ENCODE measurements at regions of chr19 and their contacts with region 1.

Region 1: DNA sequence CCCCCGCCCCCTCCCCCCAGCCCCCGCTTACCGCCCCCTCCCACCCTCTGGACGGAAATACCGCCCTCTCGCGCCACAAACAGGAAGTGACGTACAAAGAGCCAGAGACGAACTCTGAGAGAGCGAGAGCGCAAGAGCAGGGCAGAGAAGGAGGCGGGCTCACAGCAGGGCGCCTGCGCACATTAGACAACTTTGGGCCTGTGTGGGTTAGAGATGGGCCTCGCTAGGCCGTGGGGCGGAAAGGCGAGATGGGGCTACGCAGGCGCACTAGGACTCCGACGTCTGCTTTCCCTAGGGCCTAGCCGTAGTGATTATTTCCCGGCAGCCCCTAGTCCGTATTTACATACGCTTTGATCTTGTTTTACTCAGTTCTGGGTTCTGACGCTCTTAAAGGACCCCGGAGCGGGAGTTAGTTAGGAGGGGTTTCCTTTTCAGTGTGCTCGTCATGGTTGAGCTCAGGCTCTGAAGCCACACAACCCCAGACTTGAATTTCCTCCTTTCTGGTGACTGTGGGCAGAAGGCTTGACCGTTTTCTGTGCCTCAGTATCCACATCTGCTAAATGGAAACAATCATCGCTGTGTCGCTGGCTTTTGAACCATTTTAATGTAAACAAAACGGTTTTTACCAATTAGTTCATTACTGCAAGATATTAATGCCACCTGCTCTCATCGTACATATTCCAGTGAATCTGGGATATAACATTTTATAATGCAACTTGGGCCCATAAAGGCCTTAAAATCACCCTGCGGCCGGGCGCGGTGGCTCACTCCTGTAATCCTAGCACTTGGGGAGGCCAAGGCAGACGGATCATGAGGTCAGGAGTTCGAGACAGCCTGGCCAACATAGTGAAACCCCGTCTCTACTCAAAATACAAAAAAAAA is 449 bp upstream of the AKT2 start:
- DNase-seq: peak; percentile 98
- H3K4me3 Mint-ChIP-seq: peak overlapping the region; percentile 80
- H3K27ac Mint-ChIP-seq: peak overlapping the region; percentile 98
- H3K4me1 Mint-ChIP-seq: peaks cover 32% of the 10 kb centered on the region
- H3K27me3 Mint-ChIP-seq: no peaks in the 10 kb centered on the region

Region 2: GRCh38 chr19:39435499-39436349 is 849.9 kb before region 1 on chr19 and contains the start of gene RPS16:
- intact Hi-C with region 1: loop called (anchors 10 kb)
- DNase-seq: peak; percentile 99
- H3K4me3 Mint-ChIP-seq: peak within 1 kb of the TSS; percentile 99
- H3K27ac Mint-ChIP-seq: peak within 1 kb of the TSS; percentile 99
- H3K4me1 Mint-ChIP-seq: peaks cover 37% of the 10 kb centered on the region
- H3K27me3 Mint-ChIP-seq: no peaks in the 10 kb centered on the region
- total RNA-seq, gene RPS16: 2,440 and 2,532 TPM in 2 replicates

Region 3: DNA sequence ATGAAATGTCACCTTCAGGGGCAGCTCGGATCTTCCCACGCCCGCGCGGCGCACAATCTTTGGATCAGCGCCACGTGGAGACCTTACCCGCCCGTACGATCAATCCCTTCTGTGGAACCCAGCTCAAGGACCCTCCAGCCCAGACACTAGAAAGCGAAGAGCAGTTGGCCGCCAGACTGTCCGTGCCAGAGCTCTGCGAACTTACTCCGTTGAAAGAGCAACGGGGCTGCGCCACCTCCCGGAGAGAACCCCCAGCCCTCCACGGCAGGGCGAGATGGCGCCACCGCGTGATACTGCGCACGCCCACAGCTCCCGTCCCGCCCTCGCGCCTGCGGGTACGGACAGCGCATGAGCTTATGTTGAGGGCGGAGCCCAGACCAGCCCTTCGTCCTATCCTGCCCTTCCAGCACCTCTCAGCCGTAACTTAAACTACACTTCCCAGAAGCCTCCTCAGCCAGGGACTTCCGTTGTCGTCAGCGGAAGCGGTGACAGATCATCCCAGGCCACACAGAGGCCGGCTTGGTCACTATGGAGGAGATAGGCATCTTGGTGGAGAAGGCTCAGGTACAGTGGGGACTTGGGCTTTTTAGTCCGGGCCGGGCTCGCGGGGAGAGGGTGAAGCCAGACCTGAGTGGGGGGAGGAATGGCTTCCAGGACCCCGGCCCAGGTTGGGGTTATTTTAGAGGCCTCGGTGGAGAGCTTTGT is 314.8 kb before region 1 on chr19 and contains the start of gene PSMC4:
- intact Hi-C with region 1: no loop called
- DNase-seq: peak; percentile 99
- H3K4me3 Mint-ChIP-seq: peak within 1 kb of the TSS; percentile 95
- H3K27ac Mint-ChIP-seq: peak within 1 kb of the TSS; percentile 97
- H3K4me1 Mint-ChIP-seq: peaks cover 54% of the 10 kb centered on the region
- H3K27me3 Mint-ChIP-seq: no peaks in the 10 kb centered on the region
- total RNA-seq, gene PSMC4: 189 and 190 TPM in 2 replicates

Region 4: DNA sequence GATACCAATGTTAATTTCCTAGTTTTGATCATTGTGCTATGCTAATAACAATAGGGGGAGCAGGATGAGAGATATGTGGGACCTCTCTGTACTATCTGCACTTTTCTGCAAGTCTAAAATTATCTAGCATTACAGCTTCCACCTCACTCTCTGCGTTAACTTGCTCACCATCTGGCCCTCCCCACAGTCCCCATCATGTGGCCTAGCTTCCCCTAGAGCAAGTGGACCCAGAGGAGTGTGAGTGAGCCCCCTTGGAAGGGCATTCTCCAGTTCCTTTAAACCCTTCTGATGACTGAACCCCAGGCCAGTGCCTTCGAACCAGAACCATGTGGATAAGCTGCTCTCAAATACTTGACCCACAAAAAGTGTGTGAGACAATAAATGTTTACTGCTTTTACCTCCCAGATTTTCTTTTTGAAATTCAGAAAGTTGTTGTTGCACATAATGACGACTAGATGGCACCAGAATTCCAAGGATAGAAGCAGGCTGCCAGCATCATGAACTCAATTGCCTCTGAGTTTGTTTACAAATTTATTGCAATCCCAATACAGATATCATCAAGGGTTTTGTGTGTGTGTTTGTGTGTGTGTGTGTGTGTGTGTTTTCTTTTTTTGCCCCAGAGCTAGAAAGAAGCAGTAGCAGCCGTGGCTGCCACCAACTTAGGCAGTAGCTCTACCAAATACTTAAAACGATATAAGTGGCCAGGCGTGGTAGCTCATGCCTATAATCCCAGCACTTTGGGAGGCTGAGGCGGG is 145.9 kb before region 1 on chr19:
- intact Hi-C with region 1: loop called (anchors 10 kb)
- DNase-seq: no peak
- H3K4me3 Mint-ChIP-seq: no peak overlapping the region
- H3K27ac Mint-ChIP-seq: no peak overlapping the region
- H3K4me1 Mint-ChIP-seq: peaks cover 16% of the 10 kb centered on the region
- H3K27me3 Mint-ChIP-seq: peaks cover 2% of the 10 kb centered on the region

Region 5: DNA sequence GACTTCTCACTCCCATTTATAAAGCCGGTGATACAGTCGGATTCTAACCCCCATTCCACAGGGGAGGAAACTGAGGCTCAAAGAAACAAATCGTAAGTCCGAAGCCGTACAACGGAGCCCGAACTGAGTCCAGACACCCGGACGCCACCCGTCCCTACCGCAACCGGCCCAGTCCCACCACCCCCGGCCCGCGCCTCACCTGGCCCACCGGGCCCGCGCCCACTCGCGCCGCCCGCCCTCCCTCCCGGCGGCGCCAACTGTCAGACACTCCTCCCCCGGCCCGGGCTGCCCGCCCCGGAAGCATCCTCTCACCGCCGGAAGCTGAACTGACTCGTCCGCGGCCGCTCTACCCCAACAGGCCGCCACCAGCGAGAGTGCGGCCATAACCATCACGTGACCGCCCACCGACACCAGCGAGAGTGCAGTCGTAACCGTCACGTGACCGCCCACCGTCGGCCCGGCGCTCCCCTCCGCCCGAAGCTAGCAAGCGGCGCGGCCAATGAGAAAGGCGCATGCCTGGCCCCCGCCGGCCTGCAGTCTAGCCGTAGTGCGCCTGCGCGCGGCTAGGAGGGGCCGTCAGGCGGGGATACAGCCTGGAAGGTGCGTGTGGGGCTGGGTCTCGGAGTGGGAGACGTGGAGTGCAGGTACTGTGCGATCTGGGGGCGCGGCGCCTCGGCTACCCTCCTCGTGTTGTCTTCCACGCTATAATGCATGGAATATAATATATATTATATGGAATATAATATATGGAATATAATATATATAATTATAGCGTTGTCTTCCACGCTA is 62.7 kb after region 1 on chr19 and contains the starts of genes C19orf47 and PLD3:
- intact Hi-C with region 1: loop called (anchors 1 kb)
- DNase-seq: peak; percentile 99
- H3K4me3 Mint-ChIP-seq: peak within 1 kb of the TSS; percentile 97
- H3K27ac Mint-ChIP-seq: peak within 1 kb of the TSS; percentile 95
- H3K4me1 Mint-ChIP-seq: peaks cover 21% of the 10 kb centered on the region
- H3K27me3 Mint-ChIP-seq: peaks cover 2% of the 10 kb centered on the region
- total RNA-seq, gene C19orf47: 26.4 and 28.1 TPM in 2 replicates
- total RNA-seq, gene PLD3: 45.0 and 45.3 TPM in 2 replicates

Region 6: DNA sequence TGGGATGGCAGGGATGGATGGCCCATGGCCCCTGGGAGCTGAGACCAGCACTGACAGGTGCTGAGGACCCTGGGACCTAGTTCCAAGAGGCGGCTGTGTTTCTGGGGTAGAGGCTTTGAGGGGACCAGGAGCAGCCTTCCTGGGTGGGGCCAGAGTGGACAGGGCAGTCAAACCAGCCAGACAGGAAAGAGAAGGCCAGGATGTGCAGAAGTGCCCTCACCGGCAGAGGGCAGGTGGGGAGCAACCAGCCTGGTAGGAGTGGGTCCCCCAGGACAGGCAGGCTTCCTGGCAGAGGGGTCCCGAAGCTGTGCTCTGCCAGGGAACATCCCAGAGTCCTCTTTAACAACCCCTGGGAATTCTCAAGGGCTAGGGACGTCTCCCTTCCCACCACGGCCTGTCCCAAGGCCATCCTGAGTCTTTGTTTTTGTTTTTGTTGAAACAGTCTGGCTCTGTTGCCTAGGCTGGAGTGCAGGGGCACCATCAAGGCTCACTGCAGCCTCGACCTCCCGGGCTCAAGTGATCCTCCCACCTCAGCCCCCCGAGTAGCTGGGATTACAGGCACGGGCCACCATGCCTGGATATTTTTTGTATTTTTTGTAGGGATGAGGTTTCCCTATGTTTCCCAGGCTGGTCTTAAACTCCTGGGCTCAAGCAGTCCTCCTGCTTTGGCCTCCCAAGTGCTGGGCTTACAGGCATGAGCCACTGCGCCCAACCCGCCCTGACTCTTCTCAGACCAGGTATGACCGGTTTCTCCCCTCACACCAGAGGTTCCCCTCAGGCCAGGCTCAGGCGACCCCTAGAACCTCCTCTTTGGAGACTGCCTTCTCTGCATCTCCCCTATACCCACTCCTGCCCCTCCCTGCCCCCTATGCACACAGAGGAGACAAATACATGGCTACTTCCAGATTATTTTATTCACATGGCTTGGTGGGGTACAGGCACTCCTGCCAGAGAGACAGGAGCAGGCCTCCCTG is 107.6 kb after region 1 on chr19:
- intact Hi-C with region 1: no loop called
- DNase-seq: no peak
- H3K4me3 Mint-ChIP-seq: no peak overlapping the region
- H3K27ac Mint-ChIP-seq: no peak overlapping the region
- H3K4me1 Mint-ChIP-seq: no peaks in the 10 kb centered on the region
- H3K27me3 Mint-ChIP-seq: peaks cover 2% of the 10 kb centered on the region

Region 7: DNA sequence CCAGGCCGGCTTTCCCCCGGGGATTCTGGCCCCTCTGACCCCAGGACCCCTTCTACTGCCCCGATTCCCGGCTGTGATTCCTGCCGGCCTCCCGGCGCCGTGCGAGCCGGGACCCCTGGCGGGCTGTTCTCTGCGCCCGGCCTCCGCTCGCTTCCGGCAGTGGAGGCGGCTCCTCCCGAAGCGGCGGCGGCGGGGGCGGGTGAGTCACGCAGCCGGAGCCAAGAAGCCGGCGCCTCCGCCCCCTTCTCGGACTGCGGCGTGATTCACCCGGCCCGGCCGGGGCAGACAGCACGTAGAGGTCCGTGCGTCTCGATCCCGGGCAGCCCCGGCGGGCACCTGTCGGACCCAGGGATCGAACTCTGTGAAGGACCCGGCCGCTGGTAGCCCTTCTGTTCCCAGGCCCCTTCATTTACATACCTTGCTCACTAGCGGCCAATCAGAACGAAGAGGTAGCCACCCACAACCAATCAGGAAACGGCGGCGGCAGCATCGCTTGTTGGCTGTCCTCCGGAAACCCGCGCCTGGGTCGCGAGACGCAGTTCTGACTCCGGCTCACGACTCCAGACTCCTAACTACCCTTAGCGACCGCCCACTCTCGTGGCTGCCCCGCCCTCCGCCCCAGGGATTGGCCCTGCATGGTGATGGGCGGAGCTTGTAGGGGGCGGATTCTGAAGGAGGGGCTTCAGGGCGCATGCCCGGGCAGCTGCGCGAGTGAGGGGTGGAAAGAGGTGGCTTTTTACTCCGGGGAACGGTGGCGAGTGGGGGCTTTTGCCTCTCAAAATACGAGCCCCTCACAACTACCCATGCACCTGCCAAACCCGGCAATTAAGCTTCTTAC is 140.1 kb after region 1 on chr19 and contains the start of gene SERTAD1:
- intact Hi-C with region 1: loop called (anchors 1 kb)
- DNase-seq: peak; percentile 100
- H3K4me3 Mint-ChIP-seq: peak within 1 kb of the TSS; percentile 93
- H3K27ac Mint-ChIP-seq: peak within 1 kb of the TSS; percentile 99
- H3K4me1 Mint-ChIP-seq: peaks cover 7% of the 10 kb centered on the region
- H3K27me3 Mint-ChIP-seq: peaks cover 2% of the 10 kb centered on the region
- total RNA-seq, gene SERTAD1: 18.3 and 19.4 TPM in 2 replicates

Region 8: GRCh38 chr19:40465557-40466150 is 180.1 kb after region 1 on chr19 and contains the start of gene BLVRB:
- intact Hi-C with region 1: loop called (anchors 2 kb)
- DNase-seq: peak; percentile 99
- H3K4me3 Mint-ChIP-seq: peak within 1 kb of the TSS; percentile 77
- H3K27ac Mint-ChIP-seq: peak within 1 kb of the TSS; percentile 92
- H3K4me1 Mint-ChIP-seq: peaks cover 28% of the 10 kb centered on the region
- H3K27me3 Mint-ChIP-seq: peaks cover 27% of the 10 kb centered on the region
- total RNA-seq, gene BLVRB: 6.1 and 8.2 TPM in 2 replicates

Region 9: GRCh38 chr19:40716655-40717324 is 431.2 kb after region 1 on chr19 and contains the starts of genes COQ8B and ITPKC:
- intact Hi-C with region 1: loop called (anchors 5 kb)
- DNase-seq: peak; percentile 100
- H3K4me3 Mint-ChIP-seq: peak within 1 kb of the TSS; percentile 97
- H3K27ac Mint-ChIP-seq: peak within 1 kb of the TSS; percentile 95
- H3K4me1 Mint-ChIP-seq: peaks cover 44% of the 10 kb centered on the region
- H3K27me3 Mint-ChIP-seq: no peaks in the 10 kb centered on the region
- total RNA-seq, gene COQ8B: 38.4 and 41.6 TPM in 2 replicates
- total RNA-seq, gene ITPKC: 8.7 and 9.9 TPM in 2 replicates

Measured in activated T-helper 1 cell treated with anti-CD3 and anti-CD28 coated beads, Interleukin-12 subunit alpha, Interleukin-12 subunit beta, Interleukin-2, Interleukin-4 antibody, amounts not matched to agents 30 ng/mL and 10 ng/mL and 1 ng/mL, durations not matched to agents 14 hours and 24 hours and 36 hours (primary cell).